Adrenal gland (tissue), 19 donors: ENCODE measurements at regions of chr6 and their contacts with region 1.

Region 1: GRCh38 chr6:32113386-32114352 is 4.5 kb upstream of the TNXB start:
- DNase-seq: peak; percentile 82 to 97 (median 95)
- H3K4me3 ChIP-seq: no peak overlapping the region
- H3K27ac ChIP-seq: peak overlapping the region in 4 of 5 donors; percentile 4 to 85 (median 48)
- H3K4me1 ChIP-seq: peaks cover 15 to 30% of the 10 kb centered on the region in 2 donors
- H3K27me3 ChIP-seq: no peaks in the 10 kb centered on the region
- CTCF ChIP-seq: peak in 5 of 6 experiments; percentile 45 to 64 (median 54)
- POLR2A ChIP-seq: no peak

Region 2: DNA sequence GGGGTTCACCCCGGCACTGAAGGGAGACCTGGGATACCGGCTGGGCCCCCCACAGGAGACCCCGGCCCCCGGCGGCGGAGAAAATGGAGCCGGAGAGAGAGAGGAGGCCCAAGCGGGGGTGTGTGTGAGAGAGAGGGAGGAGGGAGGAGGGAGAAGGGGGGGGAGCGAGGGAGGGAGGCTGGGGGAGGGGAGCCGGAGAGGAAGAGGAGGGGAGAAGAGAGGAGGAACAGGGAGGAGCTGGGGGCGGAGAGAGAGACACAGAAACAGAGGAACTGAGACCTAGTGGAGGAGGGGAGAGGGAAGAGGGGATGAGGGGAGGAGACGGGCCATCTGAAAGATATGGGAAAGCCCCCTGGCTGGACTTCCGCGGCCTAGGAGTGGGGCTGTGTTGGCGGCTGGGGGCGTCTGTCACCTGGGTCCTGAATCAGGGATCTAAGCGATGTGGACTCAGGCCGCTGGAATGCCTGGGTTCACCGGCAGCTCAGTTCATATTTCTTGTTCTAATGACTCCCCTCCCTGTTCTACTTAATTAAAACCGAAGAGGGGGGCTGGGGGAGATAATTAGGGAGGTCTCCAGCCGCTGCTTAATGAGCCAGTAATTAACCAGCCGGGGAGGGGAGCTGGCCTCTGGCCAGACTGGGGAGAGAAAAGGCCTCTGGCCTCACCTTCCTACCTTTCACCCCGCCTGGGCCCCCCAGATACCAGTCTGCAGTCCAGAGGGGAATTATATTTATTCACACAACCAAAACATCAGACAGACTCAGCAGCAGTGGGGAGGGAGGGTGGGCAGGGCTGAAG is 76.6 kb after region 1 on chr6 and contains the start of gene PBX2:
- intact Hi-C with region 1: loop called in 1 of 2 experiments (anchors 5 kb)
- DNase-seq: peak; percentile 93 to 98 (median 95)
- H3K4me3 ChIP-seq: peak within 1 kb of the TSS; percentile 25 to 82 (median 72)
- H3K27ac ChIP-seq: peak within 1 kb of the TSS; percentile 87 to 96 (median 89)
- H3K4me1 ChIP-seq: peaks cover 16 to 54% of the 10 kb centered on the region in 2 donors
- H3K27me3 ChIP-seq: no peaks in the 10 kb centered on the region
- CTCF ChIP-seq: no peak
- POLR2A ChIP-seq: peak in 1 of 2 donors; percentile 78
- total RNA-seq, gene PBX2: 34.4 to 109 (median 53.3) TPM